ENCODE measurements at regions of chr7 and their contacts with region 1.

Region 1: DNA sequence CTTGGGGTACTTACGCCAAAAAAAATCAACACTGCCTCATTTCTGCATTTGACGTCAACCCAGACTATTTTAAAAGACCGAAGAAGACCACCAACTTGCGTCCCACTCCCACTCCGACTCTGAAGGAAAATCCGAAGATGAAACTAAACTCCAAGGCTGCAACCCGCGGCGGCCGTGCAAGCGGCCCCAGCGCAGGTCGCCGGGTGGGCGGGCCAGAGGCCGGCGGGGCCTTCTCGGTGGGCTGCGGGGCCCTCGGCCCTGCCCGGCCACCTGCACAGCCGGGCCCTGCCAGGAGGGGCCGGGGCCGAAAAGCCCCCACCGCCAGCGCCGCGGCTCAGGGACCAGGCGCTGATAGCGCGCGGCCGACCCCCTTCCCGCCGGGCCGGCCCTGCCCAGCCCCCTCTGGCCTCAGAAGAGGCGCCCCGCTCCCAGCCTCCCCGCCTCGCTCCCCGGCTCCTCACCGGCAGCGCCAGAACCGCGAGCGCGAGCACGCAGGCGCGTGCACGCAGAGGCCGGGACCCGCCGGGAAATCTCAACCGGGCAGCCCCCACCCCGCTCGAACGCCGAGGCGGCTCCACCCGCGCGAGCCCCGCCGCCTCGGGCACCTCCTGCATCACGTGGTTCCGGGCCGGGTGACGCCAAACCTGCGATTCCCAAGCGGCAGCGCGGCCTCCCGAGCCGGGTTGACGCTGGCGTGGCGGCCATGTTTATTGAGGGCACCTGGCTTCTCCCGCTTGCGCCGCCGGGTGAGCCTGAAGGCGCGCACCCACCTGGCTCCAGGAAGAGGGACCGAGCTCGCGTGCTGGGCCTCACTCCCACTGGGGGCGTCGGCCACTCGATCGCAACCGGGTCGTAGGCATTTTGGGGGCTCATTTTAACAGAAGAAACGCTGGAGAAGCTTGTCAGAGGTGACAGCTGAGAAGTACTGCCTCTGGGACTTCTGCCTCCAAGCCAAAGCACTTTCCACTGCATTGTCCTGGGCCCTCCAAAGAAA is at the start of gene C7orf25:
- DNase-seq: peak; percentile 93
- H3K4me3 Mint-ChIP-seq: peak within 1 kb of the TSS; percentile 93
- H3K27ac Mint-ChIP-seq: peak within 1 kb of the TSS; percentile 91
- H3K4me1 Mint-ChIP-seq: peaks cover 70% of the 10 kb centered on the region
- H3K27me3 Mint-ChIP-seq: no peaks in the 10 kb centered on the region
- total RNA-seq, gene C7orf25: 4.4 TPM in 2 replicates

Region 2: GRCh38 chr7:42831718-42832431 is 79.9 kb before region 1 on chr7:
- intact Hi-C with region 1: no loop called
- DNase-seq: no peak
- H3K4me3 Mint-ChIP-seq: no peak overlapping the region
- H3K27ac Mint-ChIP-seq: no peak overlapping the region
- H3K4me1 Mint-ChIP-seq: no peaks in the 10 kb centered on the region
- H3K27me3 Mint-ChIP-seq: peaks cover 2% of the 10 kb centered on the region

Region 3: GRCh38 chr7:42869131-42870020 is 42.4 kb before region 1 on chr7:
- intact Hi-C with region 1: loop called (anchors 1 kb)
- DNase-seq: peak; percentile 40
- H3K4me3 Mint-ChIP-seq: no peak overlapping the region
- H3K27ac Mint-ChIP-seq: peak overlapping the region; percentile 87
- H3K4me1 Mint-ChIP-seq: peaks cover 22% of the 10 kb centered on the region
- H3K27me3 Mint-ChIP-seq: no peaks in the 10 kb centered on the region

Region 4: DNA sequence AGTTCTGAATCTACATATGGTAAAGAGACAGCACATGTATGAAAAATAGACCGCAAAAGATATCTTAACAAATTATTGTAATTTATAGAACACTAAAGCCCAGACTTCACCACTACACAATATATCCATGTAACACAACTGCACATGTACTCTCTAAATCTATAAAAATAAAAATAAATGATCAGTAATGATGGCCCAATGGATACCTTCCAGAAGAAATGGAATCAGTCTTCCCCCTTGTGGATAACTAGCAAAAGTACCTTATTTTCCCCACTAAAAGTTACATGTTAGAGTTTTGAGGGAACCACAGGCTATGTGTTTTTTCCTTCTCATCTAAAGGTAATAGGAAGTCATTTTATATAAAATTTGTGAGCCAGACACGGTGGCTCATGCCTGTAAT is 25.6 kb before region 1 on chr7:
- intact Hi-C with region 1: loop called (anchors 2 kb)
- DNase-seq: no peak
- H3K4me3 Mint-ChIP-seq: no peak overlapping the region
- H3K27ac Mint-ChIP-seq: no peak overlapping the region
- H3K4me1 Mint-ChIP-seq: peaks cover 21% of the 10 kb centered on the region
- H3K27me3 Mint-ChIP-seq: peaks cover 4% of the 10 kb centered on the region

Region 5: DNA sequence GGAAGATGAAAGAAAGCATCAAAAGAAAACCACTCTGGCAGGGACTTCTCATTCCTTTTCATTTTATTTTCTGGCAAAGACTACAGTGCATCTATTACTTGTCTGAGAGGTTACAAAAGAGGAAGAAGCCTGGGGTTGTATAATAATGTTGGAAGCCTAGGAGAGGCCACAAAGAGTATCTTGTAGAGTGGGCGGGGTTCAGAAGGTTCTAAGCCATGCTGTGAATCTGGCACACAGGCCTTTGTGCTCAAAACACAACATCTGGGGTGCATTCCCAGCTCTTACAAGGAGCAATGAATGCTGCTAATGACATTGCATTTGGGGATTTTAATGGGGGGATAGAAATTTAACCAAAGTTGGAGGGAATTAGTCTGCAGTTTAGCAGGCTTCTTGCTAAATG is 69.9 kb after region 1 on chr7:
- intact Hi-C with region 1: no loop called
- DNase-seq: no peak
- H3K4me3 Mint-ChIP-seq: no peak overlapping the region
- H3K27ac Mint-ChIP-seq: no peak overlapping the region
- H3K4me1 Mint-ChIP-seq: no peaks in the 10 kb centered on the region
- H3K27me3 Mint-ChIP-seq: peaks cover 7% of the 10 kb centered on the region

Region 6: DNA sequence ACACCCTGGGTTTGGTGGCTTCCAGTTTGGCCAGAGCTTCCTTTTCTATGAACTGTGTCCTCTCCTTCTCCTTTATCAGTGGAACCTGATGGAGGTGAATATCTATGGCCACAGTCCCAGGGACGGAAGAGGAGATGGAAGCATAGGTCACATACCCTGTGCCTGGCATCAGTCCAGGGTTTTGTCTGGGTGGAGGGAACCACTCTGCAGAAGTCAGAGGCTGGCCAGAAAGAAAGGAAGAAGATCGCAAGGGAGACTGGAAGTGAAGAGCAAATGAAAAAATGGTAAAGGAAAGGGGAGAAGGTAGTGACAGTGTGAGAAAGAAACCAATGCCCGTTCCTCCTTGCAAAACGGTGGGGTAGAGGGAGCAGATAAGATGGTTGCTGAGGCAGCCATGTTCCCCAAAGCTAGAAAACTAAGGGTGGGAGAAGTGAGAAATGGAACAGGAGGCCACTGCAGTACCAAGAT is 122.8 kb after region 1 on chr7:
- intact Hi-C with region 1: no loop called
- DNase-seq: no peak
- H3K4me3 Mint-ChIP-seq: no peak overlapping the region
- H3K27ac Mint-ChIP-seq: no peak overlapping the region
- H3K4me1 Mint-ChIP-seq: no peaks in the 10 kb centered on the region
- H3K27me3 Mint-ChIP-seq: peaks cover 7% of the 10 kb centered on the region

Measured in activated T-helper 2 cell treated with anti-CD3 and anti-CD28 coated beads, Interferon-gamma antibody, Interleukin-2, Interleukin-4, amounts not matched to agents 10 μg/mL and 5 μg/mL and 100 μg/mL, durations not matched to agents 14 hours and 24 hours and 36 hours (primary cell).